AG04450 (cell line): ENCODE measurements at regions of chr16 and their contacts with region 1.

Region 1: GRCh38 chr16:4550591-4550990 is 5.5 kb upstream of the C16orf96 start:
- DNase-seq: no peak
- H3K4me3 ChIP-seq: no peak overlapping the region
- H3K27ac ChIP-seq: no peak overlapping the region
- H3K27me3 ChIP-seq: peaks cover 20% of the 10 kb centered on the region
- CTCF ChIP-seq: no peak

Region 2: GRCh38 chr16:4506450-4506849 is 44.1 kb before region 1 on chr16:
- CTCF ChIA-PET with region 1: interaction called, 62 read pairs
- POLR2A ChIA-PET with region 1: interaction called, 9 read pairs
- DNase-seq: no peak
- H3K4me3 ChIP-seq: no peak overlapping the region
- H3K27ac ChIP-seq: peak overlapping the region; percentile 39
- H3K27me3 ChIP-seq: no peaks in the 10 kb centered on the region
- CTCF ChIP-seq: peak; percentile 87

Region 3: DNA sequence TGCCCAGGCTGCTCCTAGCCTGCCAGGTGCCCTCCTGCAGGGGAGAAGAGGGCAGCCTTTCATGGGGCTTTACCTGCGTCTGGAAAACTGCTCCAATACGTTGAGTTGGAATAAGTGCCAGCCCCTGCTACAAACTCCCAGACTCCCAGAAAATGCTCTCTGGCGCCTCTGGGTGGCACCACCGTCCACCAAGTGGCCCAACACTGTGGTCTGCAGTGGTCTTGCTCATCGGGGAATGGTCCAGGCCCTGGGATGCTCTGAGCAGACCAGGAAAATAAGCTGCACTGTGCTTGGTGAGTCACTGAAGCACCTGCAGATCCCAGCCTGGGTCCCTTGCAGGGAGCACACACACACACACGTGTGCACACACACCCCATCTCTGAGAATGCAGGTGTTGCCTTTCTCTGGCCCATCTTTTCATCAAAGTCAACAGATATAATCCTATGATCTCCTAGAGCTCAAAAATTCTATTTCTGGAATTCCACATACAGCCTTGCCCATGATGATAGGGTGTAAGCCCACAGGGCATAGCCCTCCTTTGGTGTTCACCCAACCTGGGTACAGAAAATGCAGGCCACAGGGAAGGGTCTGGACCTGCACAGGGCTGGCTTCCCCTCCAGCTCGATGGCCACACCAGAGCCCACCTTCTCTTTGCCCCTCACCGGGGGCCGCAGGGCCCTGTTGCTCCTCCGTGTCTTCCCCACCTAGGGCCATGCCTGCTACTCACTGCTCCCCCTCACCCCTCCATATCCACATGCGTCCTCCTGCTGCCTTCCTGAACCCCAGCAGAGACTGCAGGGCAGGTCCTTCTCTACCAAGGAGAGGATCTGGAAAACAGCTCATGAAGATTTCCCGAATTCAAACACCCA is 32.5 kb before region 1 on chr16:
- CTCF ChIA-PET with region 1: interaction called, 20 read pairs
- POLR2A ChIA-PET with region 1: no interaction called
- DNase-seq: no peak
- H3K4me3 ChIP-seq: no peak overlapping the region
- H3K27ac ChIP-seq: no peak overlapping the region
- H3K27me3 ChIP-seq: no peaks in the 10 kb centered on the region
- CTCF ChIP-seq: peak; percentile 72

Region 4: GRCh38 chr16:4538350-4539235 is 12.0 kb before region 1 on chr16 and contains the start of gene CDIP1:
- CTCF ChIA-PET with region 1: interaction called, 12 read pairs
- POLR2A ChIA-PET with region 1: no interaction called
- DNase-seq: peak; percentile 79
- H3K4me3 ChIP-seq: peak within 1 kb of the TSS; percentile 76
- H3K27ac ChIP-seq: peak within 1 kb of the TSS; percentile 39
- H3K27me3 ChIP-seq: peaks cover 12% of the 10 kb centered on the region
- CTCF ChIP-seq: no peak
- polyA plus RNA-seq, gene CDIP1: 12.2 and 14.9 TPM in 2 replicates

Region 5: DNA sequence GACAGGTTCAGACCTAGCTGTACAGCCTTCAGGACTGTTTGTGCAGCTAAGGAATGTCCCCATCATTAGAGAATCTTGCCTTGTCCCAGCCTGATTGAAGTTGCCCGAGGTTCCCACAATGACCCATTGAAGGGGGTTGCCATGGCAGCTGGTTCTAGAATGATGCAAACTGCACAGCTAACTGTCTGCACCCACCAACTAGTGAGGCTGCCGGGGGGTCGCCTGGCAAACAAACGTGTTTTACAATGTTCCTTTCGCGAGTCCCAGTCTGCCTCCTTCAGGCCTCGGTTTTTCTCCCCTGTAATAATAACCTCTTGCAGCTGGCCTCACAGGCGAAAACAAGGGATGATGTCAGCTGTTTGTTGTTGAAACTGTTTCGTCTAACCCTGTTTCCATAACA is 11.0 kb after region 1 on chr16:
- CTCF ChIA-PET with region 1: interaction called, 17 read pairs
- POLR2A ChIA-PET with region 1: no interaction called
- DNase-seq: no peak
- H3K4me3 ChIP-seq: no peak overlapping the region
- H3K27ac ChIP-seq: no peak overlapping the region
- H3K27me3 ChIP-seq: peaks cover 28% of the 10 kb centered on the region
- CTCF ChIP-seq: no peak

Region 6: GRCh38 chr16:4734063-4734729 is 183.6 kb after region 1 on chr16 and contains the starts of genes ANKS3 and DNAAF8:
- CTCF ChIA-PET with region 1: no interaction called
- POLR2A ChIA-PET with region 1: no interaction called
- DNase-seq: peak; percentile 94
- H3K4me3 ChIP-seq: peak within 1 kb of the TSS; percentile 96
- H3K27ac ChIP-seq: peak within 1 kb of the TSS; percentile 94
- H3K27me3 ChIP-seq: no peaks in the 10 kb centered on the region
- CTCF ChIP-seq: no peak
- polyA plus RNA-seq, gene ANKS3: 14.0 and 15.0 TPM in 2 replicates
- polyA plus RNA-seq, gene DNAAF8: 0.89 and 1.6 TPM in 2 replicates